ENCODE measurements at regions of chr10 and their contacts with region 1.

Region 1: DNA sequence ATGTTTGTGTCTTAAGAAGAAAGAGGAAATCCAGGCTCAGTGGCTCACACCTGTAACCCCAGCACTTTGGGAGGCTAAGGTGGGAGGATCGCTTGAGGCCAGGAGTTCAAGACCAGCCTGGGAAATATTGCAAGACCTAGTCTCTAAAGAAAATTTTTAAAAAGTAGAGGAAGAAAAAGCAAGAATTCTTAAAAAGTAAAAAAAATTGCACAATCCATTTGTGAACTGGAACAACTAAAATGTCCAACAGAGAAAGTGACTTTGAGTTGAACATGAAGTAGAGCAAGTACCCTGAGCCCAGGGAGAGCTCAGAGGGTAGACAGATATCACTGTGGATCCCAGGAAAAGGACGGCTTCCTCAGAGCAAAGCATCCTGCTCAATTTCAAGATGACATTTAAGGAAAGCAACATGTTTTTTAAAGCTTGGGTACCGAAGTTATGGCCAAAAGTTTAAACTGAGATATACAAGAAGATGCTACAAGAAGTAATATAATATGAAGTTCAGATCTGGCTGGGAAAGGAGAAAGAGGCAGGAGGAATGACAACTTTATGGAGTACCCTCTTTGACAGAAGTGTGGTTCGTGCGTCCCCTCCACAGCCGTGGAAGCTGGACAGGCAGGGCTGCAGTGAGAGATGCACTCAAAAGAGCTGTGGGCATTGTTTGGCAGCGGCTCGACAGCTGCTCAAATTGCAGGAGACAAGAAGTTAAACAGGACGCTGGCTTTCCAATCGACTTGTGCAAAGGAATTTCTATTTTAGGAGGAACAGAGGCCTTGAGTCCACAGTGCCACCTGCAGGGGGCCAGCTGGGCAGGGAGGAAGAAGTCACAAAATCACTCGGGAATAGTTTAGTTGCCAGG is 201.3 kb downstream of the JCAD start:
- DNase-seq: peak; percentile 89 to 92
- H3K4me3 ChIP-seq: no peak overlapping the region
- H3K27ac ChIP-seq: peak overlapping the region; percentile 32 to 71 (median 60)
- H3K4me1 ChIP-seq: peaks cover 28 to 36% of the 10 kb centered on the region in 2 donors
- H3K27me3 ChIP-seq: no peaks in the 10 kb centered on the region
- CTCF ChIP-seq: peak; percentile 50 to 92 (median 82)
- POLR2A ChIP-seq: peak in 1 of 2 donors; percentile 60

Region 2: DNA sequence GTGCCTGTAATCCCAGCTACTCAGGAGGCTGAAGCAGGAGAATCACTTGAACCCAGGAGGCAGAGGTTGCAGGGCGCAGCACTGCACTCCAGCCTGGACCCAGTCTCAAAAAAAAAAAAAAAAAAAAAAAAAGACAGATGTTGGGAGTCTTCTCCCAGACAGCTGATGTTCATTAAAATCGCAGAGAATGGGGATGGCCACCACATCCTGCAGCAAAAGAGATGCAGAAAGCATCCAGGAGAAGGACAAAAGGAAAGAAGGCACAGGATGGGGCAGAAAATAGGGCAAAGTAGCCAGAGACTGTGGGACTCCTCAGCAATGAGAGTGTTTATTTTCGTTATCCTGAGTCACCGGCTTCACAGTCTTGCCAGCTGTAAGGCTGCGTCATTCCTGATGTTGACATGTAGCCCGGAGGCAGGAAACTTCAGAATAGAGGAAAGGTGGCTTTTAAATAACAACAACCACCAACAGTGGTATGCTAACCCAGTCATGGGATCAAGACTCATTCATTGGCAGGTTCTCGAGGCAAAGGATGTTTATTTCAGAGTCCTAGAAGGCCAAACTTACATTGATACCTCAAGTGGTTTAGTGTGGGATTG is 73.8 kb before region 1 on chr10:
- intact Hi-C with region 1: loop called (anchors 10 kb)
- DNase-seq: peak; percentile 23 to 37
- H3K4me3 ChIP-seq: no peak overlapping the region
- H3K27ac ChIP-seq: peak overlapping the region in 2 of 3 donors; percentile 24 to 40
- H3K4me1 ChIP-seq: peaks cover under 1 to 8% of the 10 kb centered on the region in 2 donors
- H3K27me3 ChIP-seq: no peaks in the 10 kb centered on the region
- CTCF ChIP-seq: no peak
- POLR2A ChIP-seq: no peak

Measured in thyroid gland (tissue), 4 donors.